ENCODE measurements at regions of chr3 and their contacts with region 1.

Region 1: DNA sequence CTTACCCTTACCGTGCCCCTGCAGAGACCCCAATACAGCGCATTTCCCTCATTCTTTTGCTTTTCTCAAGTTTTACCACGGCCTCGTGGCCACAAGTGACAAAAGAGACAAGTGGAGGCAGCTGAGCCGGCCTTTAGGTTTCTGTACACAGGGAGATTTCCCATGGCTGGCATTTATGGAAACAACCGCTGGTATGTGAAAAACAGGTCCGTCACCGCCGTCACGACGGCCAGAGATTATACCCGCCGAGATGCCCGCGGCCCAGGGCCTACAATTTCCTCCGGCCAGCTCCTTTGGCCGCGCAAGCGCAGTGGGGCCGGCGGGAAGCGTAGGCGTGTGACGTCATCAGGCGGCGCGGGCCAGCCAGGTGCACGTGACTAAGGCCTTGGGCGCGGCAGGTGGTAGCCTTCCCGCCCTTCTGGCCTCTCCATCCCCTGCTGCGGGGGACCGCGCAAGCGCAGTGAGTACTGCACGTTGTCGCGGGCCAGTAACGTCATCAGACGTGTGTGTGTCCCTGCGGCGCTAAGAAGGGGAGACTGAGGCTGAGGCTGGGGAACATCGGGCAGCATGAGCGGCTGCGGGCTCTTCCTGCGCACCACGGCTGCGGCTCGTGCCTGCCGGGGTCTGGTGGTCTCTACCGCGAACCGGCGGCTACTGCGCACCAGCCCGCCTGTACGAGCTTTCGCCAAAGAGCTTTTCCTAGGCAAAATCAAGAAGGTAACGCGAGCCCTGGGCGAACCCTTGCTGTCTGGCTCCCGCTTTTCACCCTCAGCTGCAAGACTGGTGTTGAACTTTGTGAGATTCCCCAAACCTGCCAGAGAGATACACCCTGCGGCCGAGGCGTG is at the start of gene ACAD9:
- DNase-seq: peak; percentile 97
- H3K4me3 Mint-ChIP-seq: peak within 1 kb of the TSS; percentile 86
- H3K27ac Mint-ChIP-seq: peak within 1 kb of the TSS; percentile 88
- H3K4me1 Mint-ChIP-seq: peaks cover 67% of the 10 kb centered on the region
- H3K27me3 Mint-ChIP-seq: peaks cover 13% of the 10 kb centered on the region

Region 2: DNA sequence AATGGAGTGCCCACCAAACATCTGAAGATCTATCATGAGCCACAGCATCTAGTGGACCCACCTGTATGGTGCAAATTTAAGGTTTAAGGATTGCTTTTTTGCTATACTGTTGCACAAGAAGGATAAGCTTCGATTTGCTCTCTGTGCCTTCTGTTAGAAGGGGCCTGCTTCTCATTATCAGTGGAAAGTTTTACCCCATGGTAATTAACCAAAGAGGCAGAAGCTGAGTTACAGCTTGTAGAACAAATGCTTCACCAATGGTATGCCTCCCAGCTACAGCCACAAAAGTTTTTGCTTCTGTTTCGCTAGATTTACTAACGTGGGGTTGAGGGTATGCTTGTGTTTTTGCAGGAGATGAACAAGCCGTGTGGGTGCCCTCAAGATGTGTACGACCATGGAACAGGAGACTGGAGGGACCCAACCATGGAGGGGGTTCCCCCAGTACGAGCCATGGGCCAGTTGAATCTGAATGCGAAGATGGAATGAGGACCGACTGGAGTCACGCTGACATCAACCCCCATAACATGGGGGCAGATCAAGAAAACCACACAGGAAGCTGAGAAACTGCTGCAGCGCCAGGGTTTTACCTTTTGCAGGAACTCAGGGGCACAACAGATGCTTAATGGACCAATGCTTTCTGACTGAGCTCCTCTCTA is 43.6 kb after region 1 on chr3:
- CTCF ChIA-PET with region 1: interaction called, 32 read pairs
- DNase-seq: peak; percentile 73
- H3K4me3 Mint-ChIP-seq: peak overlapping the region; percentile 60
- H3K27ac Mint-ChIP-seq: peak overlapping the region; percentile 84
- H3K4me1 Mint-ChIP-seq: peaks cover 38% of the 10 kb centered on the region
- H3K27me3 Mint-ChIP-seq: peaks cover 13% of the 10 kb centered on the region

Region 3: DNA sequence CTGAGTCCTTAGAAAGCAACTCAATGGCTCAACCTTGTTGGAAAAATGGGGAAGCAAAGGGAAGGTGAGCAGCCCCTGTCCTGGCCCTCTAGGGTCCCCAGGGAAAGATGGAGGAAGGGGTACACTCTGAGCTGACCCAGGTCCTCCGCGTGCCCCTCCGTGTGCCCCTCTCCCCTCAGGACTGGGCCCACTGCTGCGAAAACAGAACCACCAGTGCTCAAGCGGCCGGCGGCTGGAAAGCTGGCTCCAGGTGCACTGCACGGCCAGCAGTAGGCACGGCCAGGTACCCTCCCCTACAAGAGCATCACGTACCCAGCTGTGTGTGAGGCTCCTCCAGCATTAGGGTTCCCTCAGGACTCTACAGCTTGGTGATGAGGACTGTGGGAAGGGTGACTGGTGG is 215.9 kb after region 1 on chr3:
- CTCF ChIA-PET with region 1: no interaction called
- DNase-seq: no peak
- H3K4me3 Mint-ChIP-seq: no peak overlapping the region
- H3K27ac Mint-ChIP-seq: no peak overlapping the region
- H3K4me1 Mint-ChIP-seq: peaks cover 16% of the 10 kb centered on the region
- H3K27me3 Mint-ChIP-seq: no peaks in the 10 kb centered on the region

Measured in activated naive CD4-positive, alpha-beta T cell treated with anti-CD3 and anti-CD28 coated beads, Interleukin-2, amount 10 ng/mL, durations not matched to agents 7 days and 5 days (primary cell).